Naive thymus-derived CD4-positive, alpha-beta T cell (primary cell): ENCODE measurements at regions of chr14 and their contacts with region 1.

Region 1: DNA sequence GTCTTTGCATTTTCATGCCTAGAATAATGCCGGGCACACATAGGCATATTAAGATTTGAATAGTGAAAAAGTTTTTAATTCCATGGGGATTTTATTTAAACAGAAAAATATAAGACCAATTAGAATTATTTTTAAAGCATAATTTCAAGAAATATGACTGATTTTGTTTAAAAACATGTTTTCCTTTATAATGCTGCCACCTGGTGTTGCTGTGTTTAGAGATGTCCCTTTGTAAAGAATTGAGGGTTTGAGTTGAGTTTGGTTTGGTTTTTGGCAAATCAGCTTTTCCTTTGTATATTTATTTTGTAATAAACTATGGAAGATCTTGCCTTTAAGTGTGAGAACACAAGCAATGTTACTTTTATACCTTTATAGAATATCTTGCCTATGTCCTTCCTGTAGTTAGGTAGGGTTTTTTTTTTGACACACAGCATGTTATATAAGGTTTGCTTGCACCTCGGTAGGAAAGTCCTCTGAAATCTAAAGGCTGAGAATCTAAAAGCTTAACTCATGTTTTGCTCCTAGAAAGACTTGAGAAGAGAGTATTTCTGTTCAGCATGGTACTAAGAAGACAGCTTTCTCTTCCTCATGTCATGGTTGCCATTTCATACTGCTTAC is 31.4 kb upstream of the SNAPC1 start:
- DNase-seq: peak in 6 of 9 donors; percentile 25 to 51 (median 46)
- ATAC-seq: peak; percentile 39
- H3K4me3 ChIP-seq: no peak overlapping the region
- H3K4me3 Mint-ChIP-seq: peak overlapping the region in 1 of 10 donors; percentile 9
- H3K27ac ChIP-seq: no peak overlapping the region
- H3K27ac Mint-ChIP-seq: peak overlapping the region; percentile 9 to 76 (median 38)
- H3K4me1 ChIP-seq: peaks cover 0 to 4% of the 10 kb centered on the region in 2 donors
- H3K4me1 Mint-ChIP-seq: peaks cover 13 to 72% (median 41%) of the 10 kb centered on the region in 7 donors
- H3K27me3 ChIP-seq: no peaks in the 10 kb centered on the region
- H3K27me3 Mint-ChIP-seq: no peaks in the 10 kb centered on the region

Region 2: GRCh38 chr14:61269321-61270083 is 461.4 kb before region 1 on chr14:
- CTCF ChIA-PET with region 1: interaction called, 4 read pairs
- POLR2A ChIA-PET with region 1: no interaction called
- intact Hi-C with region 1: loop called in 1 of 2 experiments (anchors 1 kb)
- DNase-seq: peak; percentile 47 to 78 (median 71)
- ATAC-seq: peak; percentile 96
- H3K4me3 ChIP-seq: peak overlapping the region; percentile 58
- H3K4me3 Mint-ChIP-seq: peak overlapping the region; percentile 60 to 84 (median 77)
- H3K27ac ChIP-seq: no peak overlapping the region
- H3K27ac Mint-ChIP-seq: no peak overlapping the region
- H3K4me1 ChIP-seq: peaks cover 3% of the 10 kb centered on the region in 2 donors
- H3K4me1 Mint-ChIP-seq: peaks cover 0 to 8% (median 4%) of the 10 kb centered on the region in 7 donors
- H3K27me3 ChIP-seq: no peaks in the 10 kb centered on the region
- H3K27me3 Mint-ChIP-seq: peaks cover 27 to 65% (median 46%) of the 10 kb centered on the region in 5 donors

Region 3: DNA sequence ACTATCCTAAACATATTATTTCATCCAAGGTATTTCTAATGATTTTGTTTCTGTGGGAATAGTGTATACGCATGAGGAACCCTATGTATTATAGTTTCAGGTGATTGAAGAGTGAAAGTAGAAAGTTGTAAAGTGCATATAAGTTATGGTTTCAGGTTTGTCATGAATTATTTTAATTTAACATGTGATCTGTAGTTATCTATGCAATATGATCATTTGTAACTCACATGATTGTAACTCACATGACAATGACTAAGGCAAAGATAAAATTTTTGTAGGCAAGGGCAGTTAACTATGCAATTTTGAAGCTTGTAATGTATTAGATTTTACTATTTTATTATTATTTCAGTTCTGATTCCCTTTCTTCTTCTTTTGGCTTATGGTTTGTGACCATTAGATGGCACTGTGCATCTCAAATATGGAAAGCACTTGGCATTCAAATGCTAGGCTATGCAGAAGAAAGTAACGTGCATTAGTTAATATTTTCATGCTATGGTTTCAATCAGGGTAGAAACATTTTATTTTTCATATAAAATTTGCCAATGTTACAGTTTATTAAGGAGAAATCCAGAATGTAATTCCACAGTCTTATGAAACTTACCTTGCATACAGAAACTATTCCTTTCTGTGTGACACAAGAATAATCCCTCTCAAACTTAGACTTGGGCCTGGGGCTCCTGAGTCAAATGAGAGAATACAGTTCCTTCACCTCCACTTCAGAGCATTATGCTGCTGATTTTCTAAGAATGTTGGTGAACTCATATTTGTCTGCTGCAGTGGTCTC is 434.0 kb before region 1 on chr14:
- CTCF ChIA-PET with region 1: interaction called, 4 read pairs
- POLR2A ChIA-PET with region 1: no interaction called
- intact Hi-C with region 1: loop called (anchors 1 to 2 kb)
- DNase-seq: peak in 7 of 9 donors; percentile 38 to 68 (median 52)
- ATAC-seq: peak; percentile 85
- H3K4me3 ChIP-seq: no peak overlapping the region
- H3K4me3 Mint-ChIP-seq: peak overlapping the region in 2 of 10 donors; percentile 20 to 39
- H3K27ac ChIP-seq: no peak overlapping the region
- H3K27ac Mint-ChIP-seq: peak overlapping the region in 7 of 9 donors; percentile 26 to 88 (median 66)
- H3K4me1 ChIP-seq: peaks cover 15 to 40% of the 10 kb centered on the region in 2 donors
- H3K4me1 Mint-ChIP-seq: peaks cover 18 to 59% (median 56%) of the 10 kb centered on the region in 7 donors
- H3K27me3 ChIP-seq: no peaks in the 10 kb centered on the region
- H3K27me3 Mint-ChIP-seq: no peaks in the 10 kb centered on the region

Region 4: DNA sequence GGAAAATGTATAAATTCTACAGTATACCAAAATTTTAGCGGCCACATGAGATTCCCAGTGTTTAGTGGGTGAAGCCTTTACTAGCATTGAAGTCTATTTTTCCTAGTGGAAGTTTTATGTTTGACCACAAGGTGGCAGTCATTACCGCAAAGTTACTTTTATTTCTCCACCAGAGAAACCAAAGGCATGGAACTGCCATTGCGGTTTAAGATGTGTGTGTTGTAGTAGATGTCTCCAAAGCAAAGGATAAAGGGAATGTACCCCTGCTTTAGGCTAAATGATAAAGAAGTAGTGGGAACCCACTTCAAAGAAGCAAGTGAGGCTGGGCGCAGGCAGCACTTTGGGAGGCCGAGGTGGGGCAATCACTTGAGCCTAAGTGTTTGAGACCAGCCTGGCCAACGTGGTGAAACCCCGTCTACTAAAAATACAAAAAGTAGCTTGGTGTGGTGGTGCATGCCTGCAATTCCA is 269.0 kb before region 1 on chr14:
- CTCF ChIA-PET with region 1: interaction called, 35 read pairs
- POLR2A ChIA-PET with region 1: interaction called, 3 read pairs
- intact Hi-C with region 1: loop called (anchors 1 kb)
- DNase-seq: peak in 7 of 9 donors; percentile 59 to 78 (median 71)
- ATAC-seq: peak; percentile 76
- H3K4me3 ChIP-seq: no peak overlapping the region
- H3K4me3 Mint-ChIP-seq: peak overlapping the region; percentile 4 to 69 (median 41)
- H3K27ac ChIP-seq: peak overlapping the region; percentile 56
- H3K27ac Mint-ChIP-seq: peak overlapping the region in 8 of 9 donors; percentile 85 to 97 (median 90)
- H3K4me1 ChIP-seq: peaks cover 12 to 21% of the 10 kb centered on the region in 2 donors
- H3K4me1 Mint-ChIP-seq: peaks cover 33 to 87% (median 82%) of the 10 kb centered on the region in 7 donors
- H3K27me3 ChIP-seq: no peaks in the 10 kb centered on the region
- H3K27me3 Mint-ChIP-seq: no peaks in the 10 kb centered on the region

Region 5: DNA sequence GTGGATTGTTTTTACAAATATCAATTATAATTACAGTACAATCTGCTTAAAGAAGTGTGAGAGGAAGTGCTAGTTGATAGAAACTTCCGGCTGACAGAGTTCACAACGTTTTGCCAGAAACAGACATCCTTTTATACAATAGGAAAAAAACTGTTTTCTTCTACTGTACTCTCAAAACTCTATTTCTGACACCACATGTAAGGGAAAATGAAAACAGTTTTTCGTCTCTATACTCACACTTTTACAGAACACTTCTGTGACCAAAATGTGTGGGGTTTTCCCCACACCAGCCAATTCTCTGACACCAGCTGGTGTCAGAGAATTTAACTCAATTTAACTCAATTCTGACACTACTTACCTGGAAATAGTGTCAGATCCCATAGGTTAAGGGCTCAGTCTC is 59.8 kb before region 1 on chr14:
- CTCF ChIA-PET with region 1: interaction called, 4 read pairs
- POLR2A ChIA-PET with region 1: interaction called, 3 read pairs
- intact Hi-C with region 1: loop called in 1 of 2 experiments (anchors 1 kb)
- DNase-seq: peak in 7 of 9 donors; percentile 67 to 87 (median 82)
- ATAC-seq: peak; percentile 97
- H3K4me3 ChIP-seq: peak overlapping the region; percentile 24
- H3K4me3 Mint-ChIP-seq: peak overlapping the region in 1 of 10 donors; percentile 68
- H3K27ac ChIP-seq: peak overlapping the region; percentile 85
- H3K27ac Mint-ChIP-seq: no peak overlapping the region
- H3K4me1 ChIP-seq: peaks cover 29 to 66% of the 10 kb centered on the region in 2 donors
- H3K4me1 Mint-ChIP-seq: peaks cover 5 to 23% (median 18%) of the 10 kb centered on the region in 7 donors
- H3K27me3 ChIP-seq: no peaks in the 10 kb centered on the region
- H3K27me3 Mint-ChIP-seq: no peaks in the 10 kb centered on the region

Region 6: GRCh38 chr14:61719344-61720293 is 11.2 kb before region 1 on chr14:
- CTCF ChIA-PET with region 1: interaction called, 23 read pairs
- POLR2A ChIA-PET with region 1: interaction called, 5 read pairs
- intact Hi-C with region 1: loop called in 1 of 2 experiments (anchors 1 kb)
- DNase-seq: peak in 7 of 9 donors; percentile 16 to 61 (median 36)
- ATAC-seq: peak; percentile 85
- H3K4me3 ChIP-seq: peak overlapping the region; percentile 6
- H3K4me3 Mint-ChIP-seq: peak overlapping the region; percentile 5 to 80 (median 72)
- H3K27ac ChIP-seq: peak overlapping the region; percentile 56
- H3K27ac Mint-ChIP-seq: peak overlapping the region; percentile 28 to 90 (median 80)
- H3K4me1 ChIP-seq: peaks cover 23 to 35% of the 10 kb centered on the region in 2 donors
- H3K4me1 Mint-ChIP-seq: peaks cover 33 to 91% (median 81%) of the 10 kb centered on the region in 7 donors
- H3K27me3 ChIP-seq: no peaks in the 10 kb centered on the region
- H3K27me3 Mint-ChIP-seq: no peaks in the 10 kb centered on the region

Region 7: DNA sequence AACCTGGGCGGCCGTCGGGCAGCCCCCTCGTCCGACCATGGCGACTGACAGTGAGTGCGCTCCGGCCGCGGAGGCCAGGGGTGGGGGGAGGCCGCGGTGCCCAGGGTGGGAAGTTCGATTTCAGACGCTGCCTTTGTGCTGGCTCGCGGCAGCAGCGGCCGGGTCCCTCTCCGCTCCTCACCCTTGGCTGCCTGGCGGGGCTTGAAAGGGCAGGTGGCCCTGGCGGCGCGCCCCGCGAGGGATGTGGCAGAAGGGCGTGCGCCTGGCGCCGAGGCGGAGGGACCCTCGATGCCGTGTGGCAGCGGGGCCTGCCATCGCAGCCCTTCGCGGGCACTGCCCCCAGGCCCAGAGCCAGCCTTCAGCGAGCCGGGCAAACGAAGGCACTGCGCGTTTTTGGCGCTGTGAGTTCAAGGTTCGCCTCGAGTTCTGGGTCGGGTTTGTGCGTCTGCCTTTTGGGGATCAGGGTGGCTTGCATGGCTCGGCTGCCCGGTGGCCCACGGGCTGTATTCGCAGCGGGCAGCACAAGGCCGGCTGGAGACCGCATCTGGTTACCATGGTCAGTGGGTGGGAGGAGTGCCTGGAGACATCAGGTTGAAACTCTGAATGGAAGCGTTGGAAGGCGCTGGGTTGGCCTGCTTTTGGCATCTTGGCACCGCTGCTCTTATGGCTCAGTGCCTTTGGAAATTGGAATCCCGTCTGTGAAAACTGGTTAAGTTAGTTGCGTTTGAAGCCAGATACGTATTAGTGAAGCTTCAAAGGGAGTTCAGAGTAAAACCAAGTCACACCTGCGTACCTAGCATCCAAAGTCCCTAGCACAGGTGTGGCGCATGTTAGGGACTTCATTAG is 82.1 kb after region 1 on chr14:
- CTCF ChIA-PET with region 1: no interaction called
- POLR2A ChIA-PET with region 1: no interaction called
- intact Hi-C with region 1: no loop called
- DNase-seq: peak in 6 of 9 donors; percentile 6 to 28 (median 12)
- ATAC-seq: peak; percentile 24
- H3K4me3 ChIP-seq: peak overlapping the region; percentile 35
- H3K4me3 Mint-ChIP-seq: peak overlapping the region; percentile 60 to 86 (median 76)
- H3K27ac ChIP-seq: no peak overlapping the region
- H3K27ac Mint-ChIP-seq: peak overlapping the region in 1 of 9 donors; percentile 65
- H3K4me1 ChIP-seq: peaks cover 0 to 5% of the 10 kb centered on the region in 2 donors
- H3K4me1 Mint-ChIP-seq: peaks cover 0 to 14% (median 8%) of the 10 kb centered on the region in 7 donors
- H3K27me3 ChIP-seq: peaks cover 3 to 16% of the 10 kb centered on the region in 2 donors
- H3K27me3 Mint-ChIP-seq: peaks cover 32 to 85% (median 57%) of the 10 kb centered on the region in 5 donors